ENCODE measurements at regions of chr17 and their contacts with region 1.

Region 1: GRCh38 chr17:32819035-32819434 is 57.9 kb downstream of the MYO1D start:
- DNase-seq: no peak
- ATAC-seq: peak in 7 of 8 donors; percentile 12 to 76 (median 66)
- H3K4me3 ChIP-seq: peak overlapping the region in 1 of 10 donors; percentile 5
- H3K27ac ChIP-seq: peak overlapping the region in 7 of 10 donors; percentile 25 to 70 (median 43)
- H3K4me1 ChIP-seq: peaks cover 0 to 31% (median 19%) of the 10 kb centered on the region in 9 donors
- H3K27me3 ChIP-seq: peaks cover 0 to 12% (median 0%) of the 10 kb centered on the region in 7 donors
- CTCF ChIP-seq: no peak

Region 2: GRCh38 chr17:32769839-32770238 is 49.2 kb before region 1 on chr17:
- intact Hi-C with region 1: no loop called
- DNase-seq: no peak
- ATAC-seq: no peak
- H3K4me3 ChIP-seq: no peak overlapping the region
- H3K27ac ChIP-seq: no peak overlapping the region
- H3K4me1 ChIP-seq: no peaks in the 10 kb centered on the region
- H3K27me3 ChIP-seq: no peaks in the 10 kb centered on the region
- CTCF ChIP-seq: no peak

Region 3: GRCh38 chr17:32859857-32860525 is 41.0 kb after region 1 on chr17:
- intact Hi-C with region 1: loop called in 1 of 10 experiments (anchors 10 kb)
- DNase-seq: no peak
- ATAC-seq: no peak
- H3K4me3 ChIP-seq: no peak overlapping the region
- H3K27ac ChIP-seq: no peak overlapping the region
- H3K4me1 ChIP-seq: peaks cover 0 to 19% (median 0%) of the 10 kb centered on the region in 9 donors
- H3K27me3 ChIP-seq: no peaks in the 10 kb centered on the region
- CTCF ChIP-seq: no peak

Region 4: DNA sequence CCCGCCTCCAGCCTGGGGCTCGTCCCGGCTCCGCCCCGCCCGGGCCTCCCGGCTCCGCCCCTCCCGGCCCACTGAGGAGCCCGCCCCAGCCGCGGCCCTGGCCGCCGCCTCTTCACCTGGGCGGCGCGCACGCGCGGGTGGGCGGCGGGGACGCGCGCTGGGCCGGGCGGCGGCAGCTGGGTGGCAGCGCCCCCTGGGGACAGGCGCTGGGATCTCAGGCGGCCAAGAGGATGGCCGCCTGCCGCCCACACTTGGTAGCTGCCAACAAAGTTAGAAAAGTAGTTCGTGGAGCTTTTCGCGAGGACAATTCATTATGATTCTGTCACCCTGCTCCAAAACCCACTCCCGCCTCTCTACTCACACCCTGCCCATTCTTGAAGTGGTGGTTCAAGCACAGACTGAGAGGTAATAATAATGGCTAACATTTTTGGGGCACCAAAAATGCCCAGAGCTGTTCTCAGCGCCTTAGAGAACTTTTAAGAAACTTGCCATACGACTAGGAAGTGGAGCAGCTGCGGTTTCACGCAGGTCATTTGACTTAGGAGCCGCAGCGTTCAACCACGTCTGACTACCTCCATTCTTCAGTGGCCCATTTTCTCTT is 58.2 kb after region 1 on chr17:
- intact Hi-C with region 1: loop called in 2 of 10 experiments (anchors 5 kb)
- DNase-seq: peak; percentile 84 to 93
- ATAC-seq: peak; percentile 98 to 100 (median 99)
- H3K4me3 ChIP-seq: peak overlapping the region in 9 of 10 donors; percentile 74 to 97 (median 85)
- H3K27ac ChIP-seq: peak overlapping the region; percentile 64 to 91 (median 84)
- H3K4me1 ChIP-seq: peaks cover 0 to 32% (median 16%) of the 10 kb centered on the region in 9 donors
- H3K27me3 ChIP-seq: peaks cover 0 to 13% (median 0%) of the 10 kb centered on the region in 7 donors
- CTCF ChIP-seq: peak; percentile 74 to 96 (median 85)

Region 5: GRCh38 chr17:33209671-33210070 is 390.6 kb after region 1 on chr17:
- intact Hi-C with region 1: no loop called
- DNase-seq: no peak
- ATAC-seq: no peak
- H3K4me3 ChIP-seq: no peak overlapping the region
- H3K27ac ChIP-seq: no peak overlapping the region
- H3K4me1 ChIP-seq: no peaks in the 10 kb centered on the region
- H3K27me3 ChIP-seq: peaks cover 0 to 36% (median 20%) of the 10 kb centered on the region in 7 donors
- CTCF ChIP-seq: no peak

Measured in heart right ventricle (tissue), 16 donors.